ENCODE measurements at regions of chr12 and their contacts with region 1.

Region 1: GRCh38 chr12:88946372-88946997 is 366.2 kb upstream of the KITLG start:
- DNase-seq: peak; percentile 89
- H3K4me3 ChIP-seq: no peak overlapping the region
- H3K27ac ChIP-seq: peak overlapping the region; percentile 92
- H3K4me1 ChIP-seq: peaks cover 42% of the 10 kb centered on the region
- H3K27me3 ChIP-seq: no peaks in the 10 kb centered on the region
- CTCF ChIP-seq: no peak
- POLR2A ChIP-seq: no peak

Region 2: DNA sequence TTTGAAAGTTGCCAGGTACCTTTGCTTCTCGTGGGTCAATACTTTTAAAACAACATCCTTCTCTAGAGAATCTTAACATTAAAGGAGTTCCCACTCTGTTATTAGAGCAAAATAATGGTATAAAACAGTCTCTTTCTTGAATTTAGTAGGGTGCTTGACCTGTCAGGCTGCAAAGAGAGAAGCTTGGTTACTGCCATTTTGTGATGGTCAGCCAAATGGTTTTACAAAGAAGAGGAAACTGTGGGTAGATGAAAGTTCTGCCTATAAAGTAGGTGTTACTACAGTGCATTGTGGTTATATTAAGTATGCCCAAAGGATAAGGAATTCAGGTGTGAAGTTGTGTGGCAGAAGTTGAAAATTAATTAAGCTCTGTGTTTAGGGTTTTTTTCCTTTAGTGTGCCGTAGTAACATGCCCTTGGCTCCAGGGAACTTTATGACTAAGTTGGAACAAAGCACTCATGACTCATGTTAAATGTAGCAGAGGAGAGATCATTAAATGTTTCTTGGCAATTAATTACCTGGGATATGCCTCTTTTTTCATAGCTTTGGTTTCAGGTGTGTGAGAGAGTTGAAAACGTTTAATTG is 12.2 kb before region 1 on chr12:
- CTCF ChIA-PET with region 1: interaction called, 12 read pairs
- POLR2A ChIA-PET with region 1: no interaction called
- dilution Hi-C with region 1: no loop called
- intact Hi-C with region 1: no loop called
- DNase-seq: peak; percentile 39
- H3K4me3 ChIP-seq: no peak overlapping the region
- H3K27ac ChIP-seq: no peak overlapping the region
- H3K4me1 ChIP-seq: peaks cover 6% of the 10 kb centered on the region
- H3K27me3 ChIP-seq: no peaks in the 10 kb centered on the region
- CTCF ChIP-seq: no peak
- POLR2A ChIP-seq: no peak

Region 3: DNA sequence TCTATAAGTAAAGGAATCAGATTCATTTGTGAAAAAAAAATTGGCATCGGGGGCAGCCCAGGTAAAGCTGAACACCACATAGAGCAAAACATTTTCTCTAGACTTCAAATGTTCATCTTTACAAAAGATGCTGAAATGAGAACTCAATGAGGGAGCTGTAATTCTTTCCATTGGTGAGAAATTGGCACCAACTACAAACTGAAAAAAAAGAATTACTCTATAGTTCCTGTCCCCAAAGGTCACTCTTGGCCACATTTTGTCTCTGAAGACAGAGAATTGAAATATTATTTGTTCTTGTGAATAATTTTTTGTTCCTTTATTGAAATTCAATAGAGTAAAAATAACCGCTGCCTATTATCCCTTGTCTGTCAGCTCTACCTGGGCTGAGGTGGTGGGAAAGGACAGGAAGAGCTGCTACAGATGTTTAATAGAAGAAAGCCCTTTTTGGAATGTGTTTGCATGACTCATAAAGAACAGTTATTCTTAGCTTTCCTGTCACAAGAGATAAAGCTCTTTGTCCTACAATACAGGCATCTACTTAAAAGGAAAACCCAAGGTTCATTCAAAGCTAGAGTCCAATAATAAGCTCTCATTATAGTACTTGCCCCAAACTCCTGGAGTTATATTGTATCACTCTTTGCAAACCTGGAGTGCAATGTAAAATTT is 13.9 kb after region 1 on chr12:
- CTCF ChIA-PET with region 1: interaction called, 7 read pairs
- POLR2A ChIA-PET with region 1: no interaction called
- dilution Hi-C with region 1: no loop called
- intact Hi-C with region 1: loop called (anchors 1 kb)
- DNase-seq: peak; percentile 84
- H3K4me3 ChIP-seq: no peak overlapping the region
- H3K27ac ChIP-seq: peak overlapping the region; percentile 60
- H3K4me1 ChIP-seq: peaks cover 14% of the 10 kb centered on the region
- H3K27me3 ChIP-seq: no peaks in the 10 kb centered on the region
- CTCF ChIP-seq: no peak
- POLR2A ChIP-seq: no peak

Region 4: GRCh38 chr12:89016963-89017778 is 70.7 kb after region 1 on chr12:
- CTCF ChIA-PET with region 1: no interaction called
- POLR2A ChIA-PET with region 1: no interaction called
- dilution Hi-C with region 1: no loop called
- intact Hi-C with region 1: no loop called
- DNase-seq: peak; percentile 85
- H3K4me3 ChIP-seq: peak overlapping the region in 2 of 3 experiments; percentile 14 to 28
- H3K27ac ChIP-seq: no peak overlapping the region
- H3K4me1 ChIP-seq: peaks cover 8% of the 10 kb centered on the region
- H3K27me3 ChIP-seq: no peaks in the 10 kb centered on the region
- CTCF ChIP-seq: peak; percentile 55 to 60
- POLR2A ChIP-seq: no peak

Region 5: DNA sequence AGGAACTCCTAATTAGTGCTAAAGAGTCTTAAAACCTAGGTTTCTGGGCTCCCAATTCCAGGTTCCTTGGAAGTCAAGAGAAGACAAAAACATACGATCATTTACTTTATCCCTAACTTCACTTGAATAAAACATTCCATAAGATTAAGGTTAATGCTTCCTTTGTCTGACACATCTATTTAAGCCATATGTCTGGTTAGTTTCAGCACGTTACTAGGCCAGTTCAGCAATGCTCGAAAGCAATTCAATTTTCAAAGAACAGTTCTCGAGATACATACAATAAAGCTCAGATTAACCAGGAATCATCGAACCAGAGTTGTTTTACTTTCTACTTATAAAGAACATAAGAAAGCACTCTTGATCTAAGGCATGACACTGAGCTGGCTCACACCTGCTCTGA is 647.4 kb after region 1 on chr12:
- CTCF ChIA-PET with region 1: no interaction called
- POLR2A ChIA-PET with region 1: no interaction called
- dilution Hi-C with region 1: no loop called
- intact Hi-C with region 1: no loop called
- DNase-seq: no peak
- H3K4me3 ChIP-seq: no peak overlapping the region
- H3K27ac ChIP-seq: no peak overlapping the region
- H3K4me1 ChIP-seq: no peaks in the 10 kb centered on the region
- H3K27me3 ChIP-seq: no peaks in the 10 kb centered on the region
- CTCF ChIP-seq: no peak
- POLR2A ChIP-seq: no peak